Keratinocyte (primary cell): ENCODE measurements at regions of chr3 and their contacts with region 1.

Region 1: DNA sequence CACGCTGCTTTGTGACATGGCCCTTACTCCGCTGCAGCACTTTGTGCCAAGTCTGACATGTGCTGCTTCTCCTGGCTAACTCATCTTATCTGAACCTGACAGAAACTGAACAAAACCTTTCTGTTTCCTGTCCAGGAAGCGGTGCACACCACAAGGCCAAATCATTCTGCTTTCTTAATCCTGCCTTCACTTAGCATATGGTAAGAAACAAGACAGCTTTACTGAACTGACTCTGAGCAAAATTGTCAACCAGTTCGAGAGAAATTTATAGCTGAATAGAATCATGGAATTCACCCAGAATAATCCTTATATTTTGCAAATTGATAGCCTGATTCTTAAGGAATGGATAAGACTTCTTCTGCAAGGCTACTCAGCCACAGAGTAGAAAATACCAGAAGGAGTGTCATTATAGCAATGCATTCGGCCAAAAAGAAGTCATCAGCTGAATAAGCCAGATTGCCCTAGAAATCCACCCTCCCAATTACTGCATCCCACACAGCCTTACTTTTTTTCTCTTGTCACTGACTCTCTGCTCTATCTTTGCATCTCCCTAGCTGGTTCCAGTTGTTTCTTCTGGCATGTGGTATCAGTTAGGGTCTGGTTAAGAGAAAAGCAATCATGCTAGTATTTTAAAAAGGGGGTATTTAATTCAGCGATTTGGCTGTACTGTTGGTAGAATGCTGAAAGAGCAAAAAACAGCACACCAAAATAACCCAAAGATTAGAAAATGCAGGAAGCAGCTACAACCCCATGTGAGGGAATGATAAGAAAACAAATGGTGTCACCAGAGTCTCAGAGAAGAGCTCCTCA is 41.6 kb upstream of the STRIT1 start:
- DNase-seq: no peak
- H3K4me3 ChIP-seq: no peak overlapping the region
- H3K27ac ChIP-seq: no peak overlapping the region
- H3K4me1 ChIP-seq: no peaks in the 10 kb centered on the region
- H3K27me3 ChIP-seq: no peaks in the 10 kb centered on the region
- CTCF ChIP-seq: no peak

Region 2: GRCh38 chr3:154795582-154795981 is 539.5 kb before region 1 on chr3:
- dilution Hi-C with region 1: loop called (anchors 25 kb)
- DNase-seq: peak; percentile 69
- H3K4me3 ChIP-seq: no peak overlapping the region
- H3K27ac ChIP-seq: no peak overlapping the region
- H3K4me1 ChIP-seq: peaks cover 6% of the 10 kb centered on the region
- H3K27me3 ChIP-seq: no peaks in the 10 kb centered on the region
- CTCF ChIP-seq: no peak

Region 3: GRCh38 chr3:155178810-155179436 is 156.2 kb before region 1 on chr3:
- dilution Hi-C with region 1: no loop called
- DNase-seq: no peak
- H3K4me3 ChIP-seq: no peak overlapping the region
- H3K27ac ChIP-seq: no peak overlapping the region
- H3K4me1 ChIP-seq: no peaks in the 10 kb centered on the region
- H3K27me3 ChIP-seq: no peaks in the 10 kb centered on the region
- CTCF ChIP-seq: no peak

Region 4: DNA sequence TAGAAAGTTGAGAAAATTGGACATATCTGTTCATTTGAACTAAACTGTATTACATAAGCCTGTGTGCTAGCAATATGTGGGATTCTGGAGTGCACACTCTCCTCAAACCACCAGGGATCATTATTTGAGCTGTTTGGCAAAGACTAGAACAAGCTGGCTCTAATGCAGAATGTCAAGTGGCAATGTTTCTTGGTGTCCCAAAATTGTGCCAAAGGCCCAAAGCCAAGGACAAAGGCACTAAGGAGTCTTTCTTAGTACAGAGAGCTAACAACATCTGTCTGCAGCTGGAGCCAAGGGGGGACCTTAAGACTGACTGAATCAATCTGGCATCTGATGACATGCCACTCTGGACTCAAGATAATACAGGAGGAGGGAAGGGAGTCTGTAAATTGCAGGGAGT is 35.1 kb after region 1 on chr3:
- dilution Hi-C with region 1: no loop called
- DNase-seq: no peak
- H3K4me3 ChIP-seq: no peak overlapping the region
- H3K27ac ChIP-seq: no peak overlapping the region
- H3K4me1 ChIP-seq: no peaks in the 10 kb centered on the region
- H3K27me3 ChIP-seq: no peaks in the 10 kb centered on the region
- CTCF ChIP-seq: no peak